ENCODE measurements at regions of chr17 and their contacts with region 1.

Region 1: GRCh38 chr17:17356149-17356930 is 53.2 kb downstream of the NT5M start:
- DNase-seq: peak; percentile 71 to 79 (median 74)
- ATAC-seq: peak; percentile 85
- H3K4me3 ChIP-seq: no peak overlapping the region
- H3K27ac ChIP-seq: no peak overlapping the region
- H3K4me1 ChIP-seq: peaks cover 7 to 29% of the 10 kb centered on the region in 2 experiments; a peak in 4 of 5 replicates
- H3K27me3 ChIP-seq: no peaks in the 10 kb centered on the region
- CTCF ChIP-seq: peak; percentile 92 to 97 (median 97)
- EP300 ChIP-seq: no peak
- POLR2A ChIP-seq: no peak
- RAD21 ChIP-seq: peak; percentile 93 to 96

Region 2: DNA sequence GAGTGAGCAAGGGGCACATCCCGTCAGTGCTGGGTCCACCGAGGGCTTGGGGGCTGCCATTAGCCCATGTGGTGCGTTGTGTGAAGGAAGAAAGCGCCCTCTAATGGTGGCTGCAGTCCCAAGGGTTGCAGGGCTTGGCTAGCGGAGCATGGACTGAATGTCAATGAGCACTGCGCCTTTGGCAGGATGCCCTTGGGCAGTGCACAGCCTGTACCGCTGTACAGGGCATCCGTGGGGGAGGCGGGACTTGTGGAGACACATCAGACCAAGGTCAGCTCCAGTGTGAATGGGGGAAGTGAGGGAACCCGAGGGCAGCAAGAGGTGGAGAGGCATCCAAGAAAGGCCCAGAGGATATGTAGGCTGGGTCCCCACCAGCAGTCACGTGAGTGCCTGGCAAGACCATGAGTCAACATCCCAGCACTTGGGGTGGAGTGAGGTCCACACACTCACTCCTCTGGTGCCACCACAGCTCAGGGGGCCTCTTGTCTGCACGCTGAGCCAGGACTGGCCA is 45.0 kb after region 1 on chr17:
- CTCF ChIA-PET with region 1: interaction called, 4 read pairs
- POLR2A ChIA-PET with region 1: no interaction called
- in situ Hi-C with region 1: no loop called
- intact Hi-C with region 1: loop called (anchors 5 kb)
- DNase-seq: peak; percentile 30 to 55 (median 45)
- ATAC-seq: peak; percentile 93
- H3K4me3 ChIP-seq: no peak overlapping the region
- H3K27ac ChIP-seq: no peak overlapping the region
- H3K4me1 ChIP-seq: no peaks in the 10 kb centered on the region; a peak in 3 of 5 replicates
- H3K27me3 ChIP-seq: peaks cover 14 to 74% of the 10 kb centered on the region in 2 experiments
- CTCF ChIP-seq: peak; percentile 55 to 58 (median 57)
- EP300 ChIP-seq: no peak
- POLR2A ChIP-seq: no peak
- RAD21 ChIP-seq: peak in 1 of 2 experiments; percentile 43; a peak in 2 of 4 replicates

Region 3: DNA sequence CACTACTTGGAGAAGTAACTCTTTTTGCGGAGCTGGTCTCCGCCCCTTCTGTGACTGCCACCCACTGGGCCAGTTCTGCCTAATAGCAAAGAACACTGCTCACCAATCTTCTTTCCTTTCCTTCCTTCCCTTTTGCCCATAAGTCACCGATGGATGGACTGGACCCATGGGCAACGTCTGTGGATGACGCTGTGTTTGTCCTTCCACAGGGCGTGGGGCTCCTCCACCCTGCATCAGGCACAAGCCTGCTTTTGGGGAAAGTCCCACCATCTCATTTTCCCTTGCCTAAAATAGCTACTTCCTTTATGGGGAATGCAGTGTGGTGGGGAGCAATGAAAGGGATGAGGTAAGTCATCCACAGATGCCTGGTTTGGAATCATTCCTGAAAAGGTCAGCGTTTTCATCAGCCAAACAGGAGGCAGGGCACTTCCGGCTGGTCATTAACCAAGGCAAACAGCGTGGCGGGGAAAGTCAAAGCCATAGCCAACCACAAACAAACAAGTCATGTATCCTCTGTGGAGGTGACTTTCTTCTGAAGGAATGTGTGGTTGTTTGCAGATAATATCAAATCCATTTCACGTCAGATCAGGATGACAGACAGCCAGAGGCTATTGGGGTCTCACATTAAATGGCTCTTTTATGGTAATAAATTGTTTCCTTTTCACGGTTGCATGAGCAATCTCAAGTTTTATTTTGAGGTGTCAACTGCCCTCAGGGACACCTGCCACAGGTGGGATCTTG is 89.8 kb after region 1 on chr17:
- CTCF ChIA-PET with region 1: no interaction called
- POLR2A ChIA-PET with region 1: interaction called, 3 read pairs
- in situ Hi-C with region 1: no loop called
- intact Hi-C with region 1: loop called (anchors 5 kb)
- DNase-seq: no peak
- ATAC-seq: no peak; the same call in 2 of the 3 replicates
- H3K4me3 ChIP-seq: no peak overlapping the region
- H3K27ac ChIP-seq: no peak overlapping the region
- H3K4me1 ChIP-seq: peaks cover 0 to 3% of the 10 kb centered on the region in 2 experiments; a peak in 3 of 5 replicates
- H3K27me3 ChIP-seq: peaks cover 16 to 50% of the 10 kb centered on the region in 2 experiments; a peak in 4 of 5 replicates
- CTCF ChIP-seq: no peak
- EP300 ChIP-seq: no peak
- POLR2A ChIP-seq: no peak
- RAD21 ChIP-seq: no peak

Region 4: DNA sequence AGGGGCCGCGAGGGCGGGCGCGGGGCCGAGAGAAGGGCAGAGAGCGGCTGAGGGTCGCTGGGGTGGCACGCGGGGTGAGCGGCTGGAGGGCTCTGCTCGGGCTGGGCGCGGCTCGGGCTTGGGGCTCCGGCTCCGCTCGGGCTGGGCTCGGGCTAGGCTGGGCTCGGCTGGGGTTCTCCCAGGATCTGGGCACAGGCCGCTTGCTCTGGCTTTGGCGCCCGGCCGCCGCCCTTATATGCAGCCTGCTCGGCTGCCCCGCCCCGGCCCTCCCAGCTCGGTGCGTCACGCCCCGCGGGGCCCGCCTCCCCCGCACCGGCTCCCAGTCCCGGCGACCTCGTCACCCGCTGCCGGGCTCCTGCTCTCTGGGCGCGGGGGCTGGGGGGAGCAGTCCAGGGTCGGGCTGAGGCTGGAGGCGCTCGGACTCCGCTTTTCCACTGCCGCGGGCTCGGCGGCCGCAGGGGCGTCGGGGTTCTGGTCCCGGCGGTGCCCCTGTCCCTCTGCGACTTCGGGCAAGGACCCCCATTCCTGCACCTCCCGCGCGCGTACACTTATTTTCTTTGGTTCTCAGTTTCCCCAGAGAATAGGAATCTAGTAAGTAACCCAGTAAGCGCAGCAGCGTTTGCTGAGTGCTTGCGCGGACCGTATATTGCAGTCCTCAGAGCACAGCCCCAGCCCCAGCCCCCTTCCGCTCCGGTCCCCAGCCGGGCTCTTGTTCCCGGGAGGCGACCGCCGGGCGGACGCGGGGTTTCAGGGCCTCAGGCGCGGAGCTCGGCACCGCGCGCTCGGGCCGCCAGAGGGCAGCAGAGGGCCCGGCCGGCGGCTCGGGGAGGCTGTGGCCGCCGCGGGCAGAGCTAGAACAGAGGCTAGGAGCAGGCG is 140.1 kb after region 1 on chr17 and contains the start of gene RASD1:
- CTCF ChIA-PET with region 1: interaction called, 8 read pairs
- POLR2A ChIA-PET with region 1: no interaction called
- in situ Hi-C with region 1: loop called (anchors 5 kb)
- intact Hi-C with region 1: loop called (anchors 5 kb)
- DNase-seq: peak; percentile 79 to 90 (median 88)
- ATAC-seq: peak; percentile 96
- H3K4me3 ChIP-seq: peak within 1 kb of the TSS; percentile 55
- H3K27ac ChIP-seq: peak within 1 kb of the TSS; percentile 73; the same call in 1 of the 3 replicates
- H3K4me1 ChIP-seq: peaks cover 0 to 18% of the 10 kb centered on the region in 2 experiments; a peak in 3 of 5 replicates
- H3K27me3 ChIP-seq: peaks cover 0 to 16% of the 10 kb centered on the region in 2 experiments; a peak in 2 of 5 replicates
- CTCF ChIP-seq: peak; percentile 71 to 90 (median 72)
- EP300 ChIP-seq: no peak
- POLR2A ChIP-seq: 0 out of 2 replicates have a peak, but pooled peaks have one; percentile 36
- RAD21 ChIP-seq: peak; percentile 64 to 71
- polyA plus RNA-seq, gene RASD1: not detected

Region 5: DNA sequence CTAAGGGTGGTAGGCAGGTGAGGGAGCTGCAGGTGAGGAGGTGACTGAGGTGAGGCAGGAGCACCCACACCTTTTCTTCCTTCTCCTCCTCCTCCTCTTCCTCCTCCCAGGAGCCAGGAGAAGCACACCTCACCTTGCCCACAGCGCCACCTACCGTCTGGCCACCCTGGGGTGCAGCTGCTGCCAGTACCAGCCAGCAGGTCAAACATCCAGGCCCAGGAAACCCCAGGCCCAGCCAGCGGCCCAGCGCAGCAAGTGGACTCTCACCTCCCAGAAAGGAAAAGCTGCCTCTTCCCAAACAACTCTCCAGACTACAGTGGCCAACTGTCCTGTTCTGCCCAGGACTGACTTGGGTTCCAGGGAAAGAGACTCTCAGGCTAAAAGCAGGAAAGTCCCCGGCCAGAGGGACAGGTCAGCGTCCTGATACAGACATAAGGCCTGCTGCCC is 212.4 kb after region 1 on chr17:
- CTCF ChIA-PET with region 1: interaction called, 24 read pairs
- POLR2A ChIA-PET with region 1: no interaction called
- in situ Hi-C with region 1: no loop called
- intact Hi-C with region 1: loop called (anchors 2 kb)
- DNase-seq: peak; percentile 70 to 85 (median 84)
- ATAC-seq: peak; percentile 93
- H3K4me3 ChIP-seq: no peak overlapping the region
- H3K27ac ChIP-seq: no peak overlapping the region
- H3K4me1 ChIP-seq: peaks cover 0 to 4% of the 10 kb centered on the region in 2 experiments; a peak in 2 of 5 replicates
- H3K27me3 ChIP-seq: no peaks in the 10 kb centered on the region
- CTCF ChIP-seq: peak; percentile 75 to 85 (median 78)
- EP300 ChIP-seq: no peak
- POLR2A ChIP-seq: no peak
- RAD21 ChIP-seq: peak; percentile 41 to 65

Region 6: GRCh38 chr17:17580662-17581470 is 224.5 kb after region 1 on chr17:
- CTCF ChIA-PET with region 1: interaction called, 4 read pairs
- POLR2A ChIA-PET with region 1: no interaction called
- in situ Hi-C with region 1: loop called (anchors 5 kb)
- intact Hi-C with region 1: no loop called
- DNase-seq: no peak
- ATAC-seq: no peak
- H3K4me3 ChIP-seq: no peak overlapping the region
- H3K27ac ChIP-seq: no peak overlapping the region
- H3K4me1 ChIP-seq: peaks cover 0 to 9% of the 10 kb centered on the region in 2 experiments; a peak in 3 of 5 replicates
- H3K27me3 ChIP-seq: no peaks in the 10 kb centered on the region
- CTCF ChIP-seq: no peak
- EP300 ChIP-seq: no peak
- POLR2A ChIP-seq: no peak
- RAD21 ChIP-seq: no peak

Region 7: GRCh38 chr17:17641621-17642409 is 285.5 kb after region 1 on chr17:
- CTCF ChIA-PET with region 1: interaction called, 59 read pairs
- POLR2A ChIA-PET with region 1: interaction called, 3 read pairs
- in situ Hi-C with region 1: loop called (anchors 5 kb)
- intact Hi-C with region 1: loop called (anchors 1 kb)
- DNase-seq: peak; percentile 50 to 80 (median 58)
- ATAC-seq: peak; percentile 95
- H3K4me3 ChIP-seq: no peak overlapping the region
- H3K27ac ChIP-seq: no peak overlapping the region
- H3K4me1 ChIP-seq: no peaks in the 10 kb centered on the region; a peak in 1 of 5 replicates
- H3K27me3 ChIP-seq: peaks cover 0 to 6% of the 10 kb centered on the region in 2 experiments; a peak in 2 of 5 replicates
- CTCF ChIP-seq: peak; percentile 82 to 89 (median 87)
- EP300 ChIP-seq: no peak
- POLR2A ChIP-seq: no peak
- RAD21 ChIP-seq: peak; percentile 83 to 93